Prostate gland (tissue), 2 donors: ENCODE measurements at regions of chr9 and their contacts with region 1.

Region 1: DNA sequence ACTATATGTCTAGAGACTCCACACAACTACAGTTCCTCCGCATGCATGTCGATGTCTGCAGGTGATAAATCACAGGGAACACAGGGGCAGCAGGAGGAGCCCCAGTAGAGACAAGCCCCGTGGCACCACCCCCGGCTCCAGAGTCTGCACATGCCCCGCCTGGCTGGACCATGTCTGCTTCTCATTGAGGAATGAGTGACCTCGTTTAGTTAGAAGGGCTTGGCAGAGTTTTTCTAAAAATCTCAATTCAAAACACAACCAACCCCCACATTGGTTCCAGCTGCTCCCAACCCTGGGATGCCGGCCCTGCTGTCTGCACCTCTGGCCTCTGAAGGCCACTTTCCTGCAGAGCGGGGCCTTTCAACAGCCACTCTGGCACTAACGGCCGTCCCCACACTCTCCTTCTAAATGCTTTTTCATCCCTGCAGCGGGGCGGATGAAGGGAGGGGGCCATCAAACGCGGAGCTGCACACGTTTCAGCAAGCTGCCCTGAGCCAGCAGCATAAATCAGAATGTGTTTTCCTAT is 106.3 kb downstream of the ROR2 start:
- DNase-seq: no peak
- H3K4me3 ChIP-seq: no peak overlapping the region
- H3K27ac ChIP-seq: peak overlapping the region; percentile 49 to 51
- H3K4me1 ChIP-seq: peaks cover 12% of the 10 kb centered on the region
- H3K27me3 ChIP-seq: no peaks in the 10 kb centered on the region
- CTCF ChIP-seq: no peak
- POLR2A ChIP-seq: no peak

Region 2: DNA sequence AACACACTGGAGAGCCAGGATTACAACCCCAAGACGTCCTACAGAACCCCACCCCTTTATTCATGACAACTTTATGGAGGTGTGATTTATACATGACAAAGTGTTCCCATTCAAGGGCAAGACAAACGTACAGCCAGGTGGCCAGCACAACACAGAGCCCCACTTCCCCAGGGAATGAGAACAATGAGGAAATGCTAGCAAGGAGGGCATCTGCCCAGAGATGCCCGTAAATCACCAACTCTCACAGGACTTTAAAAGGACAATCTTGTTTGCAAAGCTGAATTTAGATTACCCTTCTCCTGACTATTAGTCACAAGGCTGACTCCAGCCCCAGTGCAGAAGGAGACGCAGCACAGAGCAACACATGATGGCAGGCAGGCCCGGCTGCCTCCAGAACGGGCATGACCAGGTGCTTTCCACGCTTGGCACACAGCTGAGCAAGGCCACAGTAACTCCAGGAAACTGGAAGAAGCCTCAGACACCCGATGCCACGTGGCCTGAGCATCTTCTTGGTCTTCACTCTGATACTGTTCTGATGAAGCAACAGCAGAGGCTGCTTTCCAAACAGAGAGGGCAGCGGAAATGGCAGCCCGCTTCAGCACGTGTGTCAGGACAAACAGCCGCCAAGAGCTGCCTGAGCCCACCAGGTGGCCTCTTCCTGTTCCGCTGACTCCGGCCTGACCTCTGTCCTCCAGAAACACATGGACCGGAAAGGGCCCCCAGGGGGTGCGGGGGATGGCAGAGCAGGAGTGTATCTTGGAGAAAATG is 54.9 kb after region 1 on chr9:
- intact Hi-C with region 1: loop called (anchors 5 kb)
- DNase-seq: peak; percentile 93
- H3K4me3 ChIP-seq: no peak overlapping the region
- H3K27ac ChIP-seq: peak overlapping the region; percentile 79 to 91
- H3K4me1 ChIP-seq: peaks cover 61% of the 10 kb centered on the region
- H3K27me3 ChIP-seq: no peaks in the 10 kb centered on the region
- CTCF ChIP-seq: peak in 1 of 4 experiments; percentile 39
- POLR2A ChIP-seq: peak; percentile 60

Region 3: DNA sequence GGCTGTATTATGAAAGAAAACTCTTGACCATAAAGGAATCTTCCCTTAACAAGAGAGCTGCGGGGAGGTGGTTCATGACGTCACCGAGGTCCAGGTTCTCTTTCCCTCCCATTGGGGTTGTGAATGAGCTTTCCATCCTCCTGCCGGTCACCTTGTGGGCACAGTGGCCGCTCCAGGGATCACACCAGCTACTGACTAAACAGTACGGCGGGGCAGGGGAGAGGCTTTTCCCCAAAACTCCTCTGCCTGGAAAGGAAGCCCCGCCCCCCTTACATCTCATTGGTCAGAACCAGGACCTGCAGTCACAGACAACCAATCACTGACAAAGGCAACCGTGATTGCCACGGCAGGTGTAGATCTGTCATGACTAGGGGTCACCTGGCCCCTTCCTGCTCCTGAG is 70.7 kb after region 1 on chr9:
- intact Hi-C with region 1: no loop called
- DNase-seq: no peak
- H3K4me3 ChIP-seq: no peak overlapping the region
- H3K27ac ChIP-seq: no peak overlapping the region
- H3K4me1 ChIP-seq: no peaks in the 10 kb centered on the region
- H3K27me3 ChIP-seq: no peaks in the 10 kb centered on the region
- CTCF ChIP-seq: no peak
- POLR2A ChIP-seq: no peak